H1 (cell line): ENCODE measurements at regions of chr1 and their contacts with region 1.

Region 1: DNA sequence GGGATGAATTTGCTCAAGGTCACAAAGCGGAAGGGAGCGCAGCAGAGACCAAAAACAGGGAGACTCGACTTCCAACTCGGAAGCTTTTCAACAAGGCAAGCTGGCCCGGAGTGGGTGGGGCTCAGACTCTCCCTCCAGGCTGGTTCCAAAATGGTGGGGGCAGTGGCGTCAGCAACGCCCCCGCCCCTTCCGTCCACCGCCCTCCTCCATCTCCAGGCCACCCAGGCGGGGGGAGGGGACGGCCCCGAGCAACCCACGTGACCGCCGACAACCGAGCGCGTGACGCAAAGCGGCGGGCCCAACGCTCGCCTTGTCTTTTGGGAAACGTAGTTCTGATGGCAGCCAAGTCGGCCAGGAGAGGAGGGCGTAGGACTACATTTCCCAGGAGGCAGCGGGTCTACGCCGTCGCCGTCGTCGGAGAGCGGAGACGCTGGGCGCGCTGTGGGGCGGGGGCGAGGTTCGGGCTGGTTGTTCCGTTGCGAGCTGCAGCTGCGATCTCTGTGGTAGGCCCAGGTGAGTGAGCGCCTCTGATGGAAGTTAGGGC is at the start of gene THRAP3:
- DNase-seq: peak; percentile 98 to 99
- H3K4me3 ChIP-seq: peak within 1 kb of the TSS; percentile 91 to 96 (median 94)
- H3K27ac ChIP-seq: peak within 1 kb of the TSS; percentile 98
- H3K4me1 ChIP-seq: peaks cover 0 to 3% (median 0%) of the 10 kb centered on the region in 4 experiments; a peak in 1 of 7 replicates
- H3K27me3 ChIP-seq: no peaks in the 10 kb centered on the region
- CTCF ChIP-seq: no peak
- EP300 ChIP-seq: peak in 1 of 2 experiments; percentile 22; a peak in 2 of 3 replicates
- POLR2A ChIP-seq: peak; percentile 84 to 99
- RAD21 ChIP-seq: no peak
- total RNA-seq, gene THRAP3: 183 TPM in 2 replicates

Region 2: GRCh38 chr1:36155408-36156328 is 68.4 kb before region 1 on chr1 and contains the start of gene MAP7D1:
- CTCF ChIA-PET with region 1: interaction called, 38 read pairs
- POLR2A ChIA-PET with region 1: interaction called, 18 read pairs
- DNase-seq: peak in 1 of 2 experiments; percentile 93
- H3K4me3 ChIP-seq: peak within 1 kb of the TSS; percentile 64 to 96 (median 76)
- H3K27ac ChIP-seq: peak within 1 kb of the TSS; percentile 49
- H3K4me1 ChIP-seq: peaks cover 2 to 28% (median 14%) of the 10 kb centered on the region in 4 experiments
- H3K27me3 ChIP-seq: peaks cover 11 to 29% (median 25%) of the 10 kb centered on the region in 4 experiments
- CTCF ChIP-seq: no peak
- EP300 ChIP-seq: peak in 1 of 2 experiments; percentile 70; a peak in 2 of 3 replicates
- POLR2A ChIP-seq: peak in 1 of 2 experiments; percentile 37; a peak in 1 of 3 replicates
- RAD21 ChIP-seq: no peak
- total RNA-seq, gene MAP7D1: 52.4 and 55.1 TPM in 2 replicates

Region 3: DNA sequence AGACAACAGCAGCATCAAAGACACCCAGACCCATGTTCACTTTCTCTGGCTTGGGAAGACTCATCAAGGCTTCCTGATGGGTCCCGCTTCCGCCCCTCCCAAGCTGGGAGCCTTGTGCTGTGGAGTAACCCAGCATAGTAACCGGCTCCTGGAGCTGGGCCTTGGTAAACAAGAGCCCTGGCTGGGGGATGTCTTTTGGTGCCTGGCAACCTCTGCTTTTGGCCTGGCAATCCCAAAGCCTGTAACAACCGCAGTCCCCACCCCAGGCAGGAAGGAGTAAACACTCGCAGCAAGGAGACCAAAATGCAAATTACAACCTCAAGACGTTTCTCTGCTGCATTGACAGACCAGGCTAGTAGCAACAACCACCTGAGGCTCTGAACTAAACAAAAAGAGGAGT is 16.7 kb before region 1 on chr1:
- CTCF ChIA-PET with region 1: interaction called, 12 read pairs
- POLR2A ChIA-PET with region 1: interaction called, 7 read pairs
- DNase-seq: peak in 1 of 2 experiments; percentile 53
- H3K4me3 ChIP-seq: no peak overlapping the region
- H3K27ac ChIP-seq: no peak overlapping the region
- H3K4me1 ChIP-seq: peaks cover 0 to 10% (median 3%) of the 10 kb centered on the region in 4 experiments; a peak in 5 of 7 replicates
- H3K27me3 ChIP-seq: no peaks in the 10 kb centered on the region
- CTCF ChIP-seq: no peak
- EP300 ChIP-seq: no peak
- POLR2A ChIP-seq: no peak
- RAD21 ChIP-seq: no peak

Region 4: DNA sequence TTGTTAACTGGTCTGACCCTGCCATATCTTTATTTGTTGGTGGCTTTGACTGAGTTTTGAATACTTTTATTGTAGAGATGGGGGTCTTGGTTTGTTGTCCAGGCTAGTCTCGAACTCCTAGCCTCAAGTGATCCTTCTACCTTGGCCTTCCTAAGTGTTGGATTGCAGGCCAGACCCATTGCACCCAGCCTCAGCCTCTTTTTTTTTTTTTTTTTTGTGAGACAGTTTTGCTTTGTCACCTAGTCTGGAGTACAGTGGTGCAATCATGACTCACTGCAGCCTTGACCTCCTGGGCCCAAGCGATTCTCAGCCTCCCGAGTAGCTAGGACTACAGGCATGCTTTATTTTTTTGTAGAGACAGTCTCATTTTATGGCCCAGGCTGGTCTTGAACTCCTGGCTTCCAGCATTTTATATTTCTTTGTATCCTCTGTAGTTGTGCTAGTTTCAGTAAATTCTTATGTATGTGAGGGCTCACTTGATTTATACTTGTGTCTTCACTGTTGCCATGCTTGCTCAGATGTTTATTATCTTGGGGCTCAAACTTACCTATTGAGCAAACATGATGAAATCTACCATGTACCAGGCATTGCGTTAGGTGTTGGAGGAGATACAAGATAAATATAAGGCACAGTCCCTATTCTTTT is 24.3 kb after region 1 on chr1:
- CTCF ChIA-PET with region 1: no interaction called
- POLR2A ChIA-PET with region 1: interaction called, 19 read pairs
- DNase-seq: no peak
- H3K4me3 ChIP-seq: no peak overlapping the region
- H3K27ac ChIP-seq: no peak overlapping the region
- H3K4me1 ChIP-seq: no peaks in the 10 kb centered on the region
- H3K27me3 ChIP-seq: no peaks in the 10 kb centered on the region
- CTCF ChIP-seq: no peak
- EP300 ChIP-seq: no peak
- POLR2A ChIP-seq: no peak
- RAD21 ChIP-seq: no peak